Activated CD8-positive, alpha-beta T cell treated with anti-CD3 and anti-CD28 coated beads for 36 hours (primary cell): ENCODE measurements at regions of chr7 and their contacts with region 1.

Region 1: GRCh38 chr7:30938435-30939316 is 25.1 kb upstream of the GHRHR start:
- DNase-seq: peak; percentile 76
- ATAC-seq: peak; percentile 87
- H3K4me3 Mint-ChIP-seq: no peak overlapping the region
- H3K27ac Mint-ChIP-seq: no peak overlapping the region
- H3K4me1 Mint-ChIP-seq: no peaks in the 10 kb centered on the region
- H3K27me3 Mint-ChIP-seq: peaks cover 19% of the 10 kb centered on the region
- CTCF ChIP-seq: peak; percentile 91

Region 2: DNA sequence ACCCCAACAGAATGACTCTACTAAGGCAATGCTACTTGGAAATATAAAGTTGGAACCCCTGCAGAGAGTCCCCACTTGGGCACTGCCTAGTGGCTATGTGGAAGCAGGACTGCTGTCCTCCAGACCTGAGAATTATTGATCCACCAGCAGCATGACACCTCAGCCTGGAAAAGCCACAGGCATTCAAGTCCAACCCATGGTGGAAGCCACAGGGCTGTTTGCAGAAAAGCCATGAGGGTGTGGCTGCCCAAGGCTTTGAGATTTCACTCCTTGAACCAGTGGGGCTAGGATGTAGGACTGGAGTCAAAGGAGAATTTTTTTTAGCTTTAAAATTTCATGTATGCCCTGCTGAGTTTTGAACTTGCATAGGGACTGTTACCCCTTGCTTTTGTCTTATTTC is 11.5 kb after region 1 on chr7:
- CTCF ChIA-PET with region 1: interaction called, 10 read pairs
- POLR2A ChIA-PET with region 1: no interaction called
- intact Hi-C with region 1: no loop called
- DNase-seq: no peak
- ATAC-seq: no peak
- H3K4me3 Mint-ChIP-seq: no peak overlapping the region
- H3K27ac Mint-ChIP-seq: no peak overlapping the region
- H3K4me1 Mint-ChIP-seq: no peaks in the 10 kb centered on the region
- H3K27me3 Mint-ChIP-seq: peaks cover 18% of the 10 kb centered on the region
- CTCF ChIP-seq: no peak

Region 3: GRCh38 chr7:30956704-30957103 is 18.0 kb after region 1 on chr7:
- CTCF ChIA-PET with region 1: interaction called, 16 read pairs
- POLR2A ChIA-PET with region 1: no interaction called
- intact Hi-C with region 1: no loop called
- DNase-seq: no peak
- ATAC-seq: no peak
- H3K4me3 Mint-ChIP-seq: no peak overlapping the region
- H3K27ac Mint-ChIP-seq: no peak overlapping the region
- H3K4me1 Mint-ChIP-seq: no peaks in the 10 kb centered on the region
- H3K27me3 Mint-ChIP-seq: peaks cover 13% of the 10 kb centered on the region
- CTCF ChIP-seq: no peak

Region 4: GRCh38 chr7:30965372-30965771 is 26.7 kb after region 1 on chr7:
- CTCF ChIA-PET with region 1: interaction called, 16 read pairs
- POLR2A ChIA-PET with region 1: no interaction called
- intact Hi-C with region 1: no loop called
- DNase-seq: no peak
- ATAC-seq: no peak
- H3K4me3 Mint-ChIP-seq: no peak overlapping the region
- H3K27ac Mint-ChIP-seq: no peak overlapping the region
- H3K4me1 Mint-ChIP-seq: no peaks in the 10 kb centered on the region
- H3K27me3 Mint-ChIP-seq: peaks cover 8% of the 10 kb centered on the region
- CTCF ChIP-seq: no peak

Region 5: GRCh38 chr7:30974605-30975255 is 36.1 kb after region 1 on chr7:
- CTCF ChIA-PET with region 1: interaction called, 23 read pairs
- POLR2A ChIA-PET with region 1: interaction called, 3 read pairs
- intact Hi-C with region 1: no loop called
- DNase-seq: peak; percentile 84
- ATAC-seq: peak; percentile 97
- H3K4me3 Mint-ChIP-seq: no peak overlapping the region
- H3K27ac Mint-ChIP-seq: peak overlapping the region; percentile 18
- H3K4me1 Mint-ChIP-seq: no peaks in the 10 kb centered on the region
- H3K27me3 Mint-ChIP-seq: peaks cover 19% of the 10 kb centered on the region
- CTCF ChIP-seq: peak; percentile 71

Region 6: GRCh38 chr7:30983042-30983913 is 44.6 kb after region 1 on chr7:
- CTCF ChIA-PET with region 1: interaction called, 12 read pairs
- POLR2A ChIA-PET with region 1: no interaction called
- intact Hi-C with region 1: no loop called
- DNase-seq: peak; percentile 85
- ATAC-seq: peak; percentile 95
- H3K4me3 Mint-ChIP-seq: no peak overlapping the region
- H3K27ac Mint-ChIP-seq: no peak overlapping the region
- H3K4me1 Mint-ChIP-seq: no peaks in the 10 kb centered on the region
- H3K27me3 Mint-ChIP-seq: peaks cover 39% of the 10 kb centered on the region
- CTCF ChIP-seq: peak; percentile 90